ENCODE measurements at regions of chr12 and their contacts with region 1.

Region 1: GRCh38 chr12:93569656-93570551 is 2.6 kb upstream of the SOCS2 start:
- DNase-seq: peak; percentile 39 to 86 (median 73)
- ATAC-seq: peak; percentile 47
- H3K4me3 ChIP-seq: peak overlapping the region; percentile 94 to 96
- H3K4me3 Mint-ChIP-seq: peak overlapping the region; percentile 93
- H3K27ac ChIP-seq: peak overlapping the region; percentile 72 to 79
- H3K27ac Mint-ChIP-seq: peak overlapping the region; percentile 90
- H3K4me1 ChIP-seq: peaks cover 17% of the 10 kb centered on the region
- H3K4me1 Mint-ChIP-seq: peaks cover 28% of the 10 kb centered on the region
- H3K27me3 ChIP-seq: no peaks in the 10 kb centered on the region
- H3K27me3 Mint-ChIP-seq: peaks cover 2% of the 10 kb centered on the region
- CTCF ChIP-seq: peak; percentile 64

Region 2: GRCh38 chr12:92784795-92785562 is 784.9 kb before region 1 on chr12:
- CTCF ChIA-PET with region 1: no interaction called
- POLR2A ChIA-PET with region 1: no interaction called
- intact Hi-C with region 1: loop called in 1 of 2 experiments (anchors 10 kb)
- DNase-seq: peak in 3 of 9 experiments; percentile 28 to 77 (median 68)
- ATAC-seq: peak; percentile 99
- H3K4me3 ChIP-seq: no peak overlapping the region
- H3K4me3 Mint-ChIP-seq: no peak overlapping the region
- H3K27ac ChIP-seq: no peak overlapping the region
- H3K27ac Mint-ChIP-seq: no peak overlapping the region
- H3K4me1 ChIP-seq: no peaks in the 10 kb centered on the region
- H3K4me1 Mint-ChIP-seq: peaks cover 11% of the 10 kb centered on the region
- H3K27me3 ChIP-seq: no peaks in the 10 kb centered on the region
- H3K27me3 Mint-ChIP-seq: no peaks in the 10 kb centered on the region
- CTCF ChIP-seq: peak; percentile 61

Region 3: GRCh38 chr12:93441617-93442410 is 128.1 kb before region 1 on chr12 and contains the start of gene UBE2N:
- CTCF ChIA-PET with region 1: no interaction called
- POLR2A ChIA-PET with region 1: no interaction called
- intact Hi-C with region 1: loop called (anchors 1 to 10 kb)
- DNase-seq: peak; percentile 92 to 97 (median 96)
- ATAC-seq: peak; percentile 83
- H3K4me3 ChIP-seq: peak within 1 kb of the TSS; percentile 78
- H3K4me3 Mint-ChIP-seq: peak within 1 kb of the TSS; percentile 97
- H3K27ac ChIP-seq: peak within 1 kb of the TSS; percentile 87 to 90
- H3K27ac Mint-ChIP-seq: peak within 1 kb of the TSS; percentile 96
- H3K4me1 ChIP-seq: peaks cover 47% of the 10 kb centered on the region
- H3K4me1 Mint-ChIP-seq: peaks cover 48% of the 10 kb centered on the region
- H3K27me3 ChIP-seq: no peaks in the 10 kb centered on the region
- H3K27me3 Mint-ChIP-seq: no peaks in the 10 kb centered on the region
- CTCF ChIP-seq: no peak
- total RNA-seq, gene UBE2N: 89.5 to 93.6 TPM

Region 4: GRCh38 chr12:93591137-93591868 is 21.4 kb after region 1 on chr12:
- CTCF ChIA-PET with region 1: interaction called, 3 read pairs
- POLR2A ChIA-PET with region 1: no interaction called
- intact Hi-C with region 1: loop called in 1 of 2 experiments (anchors 2 kb)
- DNase-seq: peak in 8 of 9 experiments; percentile 8 to 58 (median 36)
- ATAC-seq: peak; percentile 74
- H3K4me3 ChIP-seq: peak overlapping the region; percentile 40 to 44
- H3K4me3 Mint-ChIP-seq: peak overlapping the region; percentile 80
- H3K27ac ChIP-seq: no peak overlapping the region
- H3K27ac Mint-ChIP-seq: no peak overlapping the region
- H3K4me1 ChIP-seq: peaks cover 11% of the 10 kb centered on the region
- H3K4me1 Mint-ChIP-seq: peaks cover 13% of the 10 kb centered on the region
- H3K27me3 ChIP-seq: peaks cover 22 to 24% of the 10 kb centered on the region in 2 experiments
- H3K27me3 Mint-ChIP-seq: peaks cover 59% of the 10 kb centered on the region
- CTCF ChIP-seq: no peak

Region 5: GRCh38 chr12:93979189-93979588 is 409.3 kb after region 1 on chr12:
- CTCF ChIA-PET with region 1: interaction called, 6 read pairs
- POLR2A ChIA-PET with region 1: no interaction called
- intact Hi-C with region 1: loop called in 1 of 2 experiments (anchors 1 kb)
- DNase-seq: peak in 4 of 9 experiments; percentile 3 to 54 (median 32)
- ATAC-seq: no peak
- H3K4me3 ChIP-seq: no peak overlapping the region
- H3K4me3 Mint-ChIP-seq: no peak overlapping the region
- H3K27ac ChIP-seq: no peak overlapping the region
- H3K27ac Mint-ChIP-seq: no peak overlapping the region
- H3K4me1 ChIP-seq: no peaks in the 10 kb centered on the region
- H3K4me1 Mint-ChIP-seq: peaks cover 7% of the 10 kb centered on the region
- H3K27me3 ChIP-seq: no peaks in the 10 kb centered on the region
- H3K27me3 Mint-ChIP-seq: no peaks in the 10 kb centered on the region
- CTCF ChIP-seq: peak; percentile 28

Region 6: DNA sequence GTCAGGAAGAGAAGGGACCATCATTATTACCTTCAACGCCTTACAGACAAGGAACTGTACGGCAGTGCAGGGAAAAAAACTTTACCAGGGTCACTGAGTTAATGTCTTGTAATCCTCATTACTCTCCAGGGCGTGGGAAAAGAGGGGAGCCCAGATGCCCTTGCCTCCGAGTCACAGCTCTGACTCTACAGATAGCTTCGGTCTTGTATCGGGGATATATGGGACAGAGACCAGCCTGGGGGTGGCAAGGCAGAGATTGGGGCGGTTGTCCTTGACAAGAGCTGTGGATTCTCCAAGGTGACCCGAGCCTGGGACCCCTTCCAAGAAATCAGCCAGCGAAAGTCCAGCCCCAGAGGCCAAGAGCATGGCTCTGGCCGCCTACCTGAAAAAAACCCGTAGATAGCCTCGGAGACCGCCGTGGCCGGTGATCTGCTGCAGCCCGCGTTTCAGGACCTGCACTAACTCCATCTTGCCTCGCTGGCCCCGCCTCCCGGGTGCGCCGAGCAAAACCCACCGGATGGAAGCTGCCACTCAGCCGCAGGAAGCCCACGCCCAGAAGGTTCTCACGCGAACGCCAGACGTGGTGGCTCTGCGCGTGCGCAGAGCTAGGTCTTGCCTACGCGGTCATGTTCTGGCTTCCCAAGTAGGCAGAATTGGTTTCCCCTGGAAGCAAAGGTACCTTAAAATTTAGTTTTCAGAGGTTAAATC is 1433.5 kb after region 1 on chr12 and contains the start of gene NDUFA12:
- CTCF ChIA-PET with region 1: no interaction called
- POLR2A ChIA-PET with region 1: no interaction called
- intact Hi-C with region 1: loop called (anchors 5 to 10 kb)
- DNase-seq: peak; percentile 87 to 98 (median 94)
- ATAC-seq: peak; percentile 99
- H3K4me3 ChIP-seq: peak within 1 kb of the TSS; percentile 74 to 97
- H3K4me3 Mint-ChIP-seq: peak within 1 kb of the TSS; percentile 93
- H3K27ac ChIP-seq: peak within 1 kb of the TSS; percentile 64 to 82
- H3K27ac Mint-ChIP-seq: peak within 1 kb of the TSS; percentile 94
- H3K4me1 ChIP-seq: peaks cover 46% of the 10 kb centered on the region
- H3K4me1 Mint-ChIP-seq: peaks cover 57% of the 10 kb centered on the region
- H3K27me3 ChIP-seq: no peaks in the 10 kb centered on the region
- H3K27me3 Mint-ChIP-seq: no peaks in the 10 kb centered on the region
- CTCF ChIP-seq: no peak
- total RNA-seq, gene NDUFA12: 37.4 to 42.4 TPM